Colonic mucosa (tissue), 4 donors: ENCODE measurements at regions of chr20 and their contacts with region 1.

Region 1: GRCh38 chr20:1894951-1895673 is at the start of gene SIRPA:
- DNase-seq: peak; percentile 44
- H3K4me3 ChIP-seq: peak within 1 kb of the TSS; percentile 57
- H3K27ac ChIP-seq: peak within 1 kb of the TSS; percentile 85
- H3K4me1 ChIP-seq: no peaks in the 10 kb centered on the region
- H3K27me3 ChIP-seq: no peaks in the 10 kb centered on the region
- CTCF ChIP-seq: no peak
- total RNA-seq, gene SIRPA: 9.8 to 12.2 TPM

Region 2: DNA sequence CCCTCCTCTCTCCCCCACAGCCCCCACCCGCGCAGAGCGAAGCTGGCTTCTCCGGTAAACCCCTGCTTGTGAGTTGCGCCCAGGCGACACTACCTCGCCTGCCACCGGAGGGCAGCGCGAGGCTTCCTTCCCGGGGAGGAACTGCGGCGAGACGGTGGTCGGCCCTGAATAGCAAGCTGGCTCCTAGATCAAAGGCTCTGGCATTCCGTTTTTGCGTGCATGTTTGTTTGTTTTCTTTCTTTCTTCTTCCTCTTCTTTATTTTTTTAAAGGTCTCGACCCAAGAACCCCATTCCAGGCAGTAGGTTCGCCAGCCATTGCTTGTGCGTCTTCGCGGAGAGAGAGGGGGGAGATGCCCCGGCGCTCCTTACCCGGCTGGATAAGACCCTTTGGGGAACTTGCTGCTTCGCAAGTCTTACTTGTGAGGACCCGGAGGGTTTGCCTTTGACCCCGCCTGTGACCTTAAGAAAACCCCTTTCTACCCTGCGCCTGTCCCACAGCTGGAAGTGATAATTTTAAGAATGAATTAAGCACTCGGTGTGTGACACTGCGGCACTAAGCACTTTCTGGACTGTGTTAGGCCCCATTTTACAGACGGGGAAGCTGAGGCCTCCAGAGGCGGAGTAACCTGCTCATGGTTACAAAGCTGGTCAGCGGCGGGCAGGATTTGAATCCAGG is 92.6 kb before region 1 on chr20:
- intact Hi-C with region 1: loop called (anchors 10 kb)
- DNase-seq: peak; percentile 70
- H3K4me3 ChIP-seq: peak overlapping the region; percentile 53
- H3K27ac ChIP-seq: peak overlapping the region; percentile 53
- H3K4me1 ChIP-seq: peaks cover 8% of the 10 kb centered on the region
- H3K27me3 ChIP-seq: peaks cover 9% of the 10 kb centered on the region
- CTCF ChIP-seq: peak; percentile 49

Region 3: DNA sequence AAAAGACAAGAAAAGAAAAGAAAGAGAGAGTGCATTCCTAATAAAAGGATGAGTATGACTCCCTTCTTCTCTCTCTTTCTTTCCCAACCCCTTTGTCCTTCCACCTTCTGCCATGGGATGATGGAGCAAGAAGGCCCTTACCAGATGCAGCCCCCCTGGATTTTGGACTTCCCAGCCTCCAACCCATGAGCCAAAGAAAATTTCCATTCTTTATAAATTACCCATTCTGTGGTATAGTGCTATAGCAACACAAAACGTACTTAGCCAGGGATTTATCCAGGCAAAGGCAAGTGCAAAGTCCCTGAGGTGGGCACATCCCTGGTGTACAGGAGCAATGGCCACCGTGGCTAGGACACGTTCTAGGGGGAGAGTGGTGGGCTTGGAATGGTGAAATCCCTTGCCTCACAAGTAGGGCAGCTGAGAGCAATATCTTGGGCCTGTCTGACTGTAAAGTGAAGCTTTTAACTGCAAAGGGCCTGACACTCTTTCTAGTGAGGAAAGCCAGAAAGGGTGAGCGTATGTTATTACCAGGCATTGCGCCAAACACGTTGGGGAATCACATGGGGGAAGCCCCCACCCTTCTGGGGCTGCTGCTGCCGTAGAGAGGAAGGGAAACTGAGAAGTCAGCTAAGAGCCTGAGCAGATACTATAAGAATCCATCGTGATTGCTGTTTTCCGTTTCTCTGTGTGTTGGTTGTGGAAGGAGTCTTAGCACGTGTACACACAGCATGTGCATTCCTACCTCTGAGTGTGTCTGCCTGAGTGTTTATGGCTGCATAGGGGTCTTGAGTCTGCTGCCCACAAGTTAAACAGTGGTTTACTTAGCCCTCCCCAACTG is 50.6 kb before region 1 on chr20:
- intact Hi-C with region 1: no loop called
- DNase-seq: peak; percentile 44
- H3K4me3 ChIP-seq: no peak overlapping the region
- H3K27ac ChIP-seq: no peak overlapping the region
- H3K4me1 ChIP-seq: no peaks in the 10 kb centered on the region
- H3K27me3 ChIP-seq: no peaks in the 10 kb centered on the region
- CTCF ChIP-seq: no peak